ENCODE measurements at regions of chr1 and their contacts with region 1.

Region 1: GRCh38 chr1:112501810-112502641 is 6.7 kb upstream of the WNT2B start:
- DNase-seq: peak in 1 of 2 donors; percentile 58
- H3K4me3 ChIP-seq: peak overlapping the region; percentile 29
- CTCF ChIP-seq: peak in 1 of 3 donors; percentile 19
- POLR2A ChIP-seq: no peak

Region 2: GRCh38 chr1:112619520-112620376 is 117.7 kb after region 1 on chr1 and contains the start of gene CAPZA1:
- intact Hi-C with region 1: loop called (anchors 10 kb)
- DNase-seq: peak; percentile 92 to 98
- H3K4me3 ChIP-seq: peak within 1 kb of the TSS; percentile 93
- CTCF ChIP-seq: no peak
- POLR2A ChIP-seq: peak in 1 of 2 donors; percentile 74
- total RNA-seq, gene CAPZA1: 110 to 170 (median 144) TPM

Region 3: DNA sequence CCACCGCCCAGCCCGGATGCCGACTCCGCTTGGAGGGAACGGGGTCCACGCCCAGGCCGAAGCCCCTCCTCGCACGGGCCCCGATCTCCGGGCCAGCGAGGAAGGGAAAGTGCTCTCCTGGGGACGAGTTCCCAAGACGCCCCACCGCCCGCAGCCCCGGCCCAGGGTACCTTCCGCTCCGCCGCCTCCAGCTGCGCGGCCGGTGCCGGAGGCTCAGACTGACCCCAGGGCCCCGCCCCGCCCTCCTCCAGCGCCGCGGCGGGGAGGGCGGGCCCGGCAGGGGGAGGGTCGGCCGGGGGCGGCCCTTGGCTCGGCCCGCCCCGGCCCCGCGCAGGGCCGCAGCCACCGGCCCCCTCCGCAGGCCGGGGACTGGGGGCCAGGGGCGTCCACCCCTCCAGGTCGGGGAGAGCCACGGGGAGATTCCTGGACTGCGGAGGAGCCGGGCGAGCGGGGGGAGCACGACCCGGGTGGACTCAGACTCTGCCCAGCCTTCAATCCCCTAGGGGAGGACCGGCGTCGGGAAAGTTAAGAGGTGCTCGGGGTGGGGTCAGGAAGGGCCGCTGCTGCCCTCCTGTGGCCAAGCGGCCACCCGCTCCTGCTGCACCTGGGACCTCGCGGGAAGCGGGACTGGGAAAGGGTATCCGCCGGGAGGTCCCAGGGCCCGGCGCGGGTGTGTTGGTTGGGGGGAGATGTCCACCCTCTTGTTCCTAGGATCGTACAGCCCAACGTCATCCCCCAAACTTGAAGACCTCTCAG is 205.1 kb after region 1 on chr1 and contains the start of gene RHOC:
- intact Hi-C with region 1: loop called (anchors 10 kb)
- DNase-seq: peak; percentile 83 to 97
- H3K4me3 ChIP-seq: peak within 1 kb of the TSS; percentile 90
- CTCF ChIP-seq: peak in 1 of 3 donors; percentile 77
- POLR2A ChIP-seq: no peak
- total RNA-seq, gene RHOC: 133 to 214 (median 184) TPM

Region 4: GRCh38 chr1:112935461-112936289 is 433.6 kb after region 1 on chr1:
- intact Hi-C with region 1: no loop called
- DNase-seq: no peak
- H3K4me3 ChIP-seq: no peak overlapping the region
- CTCF ChIP-seq: no peak
- POLR2A ChIP-seq: no peak

Measured in lower leg skin (tissue), 4 donors.